Activated T-helper 2 cell treated with anti-CD3 and anti-CD28 coated beads, Interferon-gamma antibody, Interleukin-2, Interleukin-4, amounts not matched to agents 10 μg/mL and 5 μg/mL and 100 μg/mL, durations not matched to agents 14 hours and 24 hours and 36 hours (primary cell): ENCODE measurements at regions of chr11 and their contacts with region 1.

Region 1: DNA sequence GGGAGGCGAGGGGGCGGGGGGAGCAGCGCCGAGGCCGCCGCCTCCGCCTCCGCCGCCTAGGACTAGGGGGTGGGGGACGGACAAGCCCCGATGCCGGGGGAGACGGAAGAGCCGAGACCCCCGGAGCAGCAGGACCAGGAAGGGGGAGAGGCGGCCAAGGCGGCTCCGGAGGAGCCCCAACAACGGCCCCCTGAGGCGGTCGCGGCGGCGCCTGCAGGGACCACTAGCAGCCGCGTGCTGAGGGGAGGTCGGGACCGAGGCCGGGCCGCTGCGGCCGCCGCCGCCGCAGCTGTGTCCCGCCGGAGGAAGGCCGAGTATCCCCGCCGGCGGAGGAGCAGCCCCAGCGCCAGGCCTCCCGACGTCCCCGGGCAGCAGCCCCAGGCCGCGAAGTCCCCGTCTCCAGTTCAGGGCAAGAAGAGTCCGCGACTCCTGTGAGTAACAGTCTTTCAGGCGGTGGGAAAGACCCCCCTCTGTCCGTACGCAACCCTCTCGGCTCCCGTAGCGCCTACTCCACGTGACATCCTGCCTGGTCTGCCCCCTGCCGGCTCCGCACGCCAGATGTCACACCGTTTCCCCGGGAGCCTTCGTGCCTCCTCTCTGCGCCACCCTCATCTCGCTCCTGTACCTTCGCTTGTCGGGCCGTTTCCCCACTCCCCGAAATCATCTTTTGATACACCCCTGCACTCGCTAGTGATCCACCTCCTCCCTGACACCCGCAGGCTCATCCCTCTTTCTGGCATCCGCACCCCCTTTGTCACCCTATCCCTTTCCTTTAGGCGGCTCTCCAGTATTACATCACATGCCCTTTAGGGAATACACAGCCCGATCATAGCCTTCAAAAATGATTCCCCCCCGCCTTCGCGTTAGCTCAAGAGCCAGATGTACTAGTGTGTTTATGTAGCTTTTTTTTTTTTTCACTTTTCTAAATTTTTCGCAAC is 598 bp downstream of the ZFP91 start:
- DNase-seq: peak; percentile 88
- H3K4me3 Mint-ChIP-seq: peak overlapping the region; percentile 95
- H3K27ac Mint-ChIP-seq: peak overlapping the region; percentile 100
- H3K4me1 Mint-ChIP-seq: peaks cover 48% of the 10 kb centered on the region
- H3K27me3 Mint-ChIP-seq: no peaks in the 10 kb centered on the region

Region 2: DNA sequence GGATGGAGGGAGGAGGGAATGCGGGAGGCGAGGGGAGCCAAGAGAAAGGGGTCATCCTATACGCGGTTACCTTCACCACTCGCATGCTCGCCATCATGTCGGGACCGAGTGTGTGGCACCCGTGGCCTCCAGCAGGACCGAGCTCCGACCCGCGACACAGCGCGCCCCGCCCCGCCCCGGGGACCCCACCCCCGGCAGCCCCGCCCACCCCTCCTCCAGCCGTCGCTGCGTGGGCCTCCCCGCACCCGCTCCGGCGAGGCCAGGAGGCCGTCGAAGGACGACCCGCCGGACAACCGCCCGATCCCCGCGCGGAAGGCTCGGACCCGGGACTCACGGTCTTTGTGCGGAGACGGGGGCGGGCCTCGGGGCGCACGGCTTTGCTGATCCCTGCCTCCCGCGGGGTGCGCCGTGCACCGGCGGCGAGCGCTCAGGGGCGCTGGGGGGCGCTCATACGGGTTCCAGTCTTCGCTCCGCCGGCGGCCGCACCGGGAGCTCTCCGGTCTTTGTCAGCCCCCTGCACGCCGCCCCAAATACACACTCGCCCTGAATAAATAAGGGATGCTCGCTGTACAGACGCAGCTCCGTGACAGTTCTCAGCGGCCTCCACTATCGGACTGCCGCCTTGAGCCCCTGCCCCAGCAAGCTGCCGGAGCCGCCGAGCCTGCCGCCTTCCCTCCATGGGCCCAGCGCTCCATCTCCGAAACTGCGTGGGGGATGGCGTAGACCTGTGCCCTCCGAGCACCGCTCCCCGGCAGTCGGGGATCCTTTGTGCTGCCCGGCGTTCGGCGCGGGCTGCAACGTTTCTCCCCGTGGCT is 1011.7 kb before region 1 on chr11 and contains the start of gene UBE2L6:
- intact Hi-C with region 1: loop called (anchors 5 kb)
- DNase-seq: peak; percentile 56
- H3K4me3 Mint-ChIP-seq: peak within 1 kb of the TSS; percentile 99
- H3K27ac Mint-ChIP-seq: peak within 1 kb of the TSS; percentile 97
- H3K4me1 Mint-ChIP-seq: peaks cover 26% of the 10 kb centered on the region
- H3K27me3 Mint-ChIP-seq: no peaks in the 10 kb centered on the region
- total RNA-seq, gene UBE2L6: 135 and 137 TPM in 2 replicates

Region 3: GRCh38 chr11:57792060-57792541 is 787.4 kb before region 1 on chr11:
- intact Hi-C with region 1: loop called (anchors 2 kb)
- DNase-seq: peak; percentile 85
- H3K4me3 Mint-ChIP-seq: peak overlapping the region; percentile 45
- H3K27ac Mint-ChIP-seq: peak overlapping the region; percentile 68
- H3K4me1 Mint-ChIP-seq: peaks cover 40% of the 10 kb centered on the region
- H3K27me3 Mint-ChIP-seq: no peaks in the 10 kb centered on the region

Region 4: GRCh38 chr11:58609723-58610122 is 30.3 kb after region 1 on chr11:
- intact Hi-C with region 1: loop called (anchors 5 kb)
- DNase-seq: no peak
- H3K4me3 Mint-ChIP-seq: no peak overlapping the region
- H3K27ac Mint-ChIP-seq: peak overlapping the region; percentile 8
- H3K4me1 Mint-ChIP-seq: peaks cover 48% of the 10 kb centered on the region
- H3K27me3 Mint-ChIP-seq: no peaks in the 10 kb centered on the region

Region 5: DNA sequence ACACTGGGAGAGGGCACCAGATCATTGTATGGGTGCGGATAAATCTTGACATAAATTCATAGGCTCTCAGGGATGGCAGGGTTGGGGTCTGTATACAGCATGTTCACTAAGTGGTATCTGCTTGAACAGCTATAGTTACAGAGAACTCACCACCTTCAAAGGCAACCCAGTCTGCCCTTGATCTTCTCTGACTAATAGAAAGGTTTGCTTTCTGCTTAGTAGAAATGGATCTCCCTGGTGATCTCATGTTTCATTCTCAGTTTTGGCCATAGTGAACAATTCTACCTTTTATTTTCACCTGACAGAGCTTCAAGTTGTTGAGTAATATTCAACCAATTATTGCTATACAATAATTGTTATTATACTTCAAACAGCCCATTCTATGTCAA is 75.4 kb after region 1 on chr11:
- intact Hi-C with region 1: no loop called
- DNase-seq: no peak
- H3K4me3 Mint-ChIP-seq: no peak overlapping the region
- H3K27ac Mint-ChIP-seq: no peak overlapping the region
- H3K4me1 Mint-ChIP-seq: peaks cover 9% of the 10 kb centered on the region
- H3K27me3 Mint-ChIP-seq: peaks cover 4% of the 10 kb centered on the region

Region 6: GRCh38 chr11:58788355-58789023 is 209.0 kb after region 1 on chr11:
- intact Hi-C with region 1: loop called (anchors 5 kb)
- DNase-seq: peak; percentile 23
- H3K4me3 Mint-ChIP-seq: no peak overlapping the region
- H3K27ac Mint-ChIP-seq: no peak overlapping the region
- H3K4me1 Mint-ChIP-seq: peaks cover 1% of the 10 kb centered on the region
- H3K27me3 Mint-ChIP-seq: no peaks in the 10 kb centered on the region

Region 7: GRCh38 chr11:58888579-58888978 is 309.1 kb after region 1 on chr11:
- intact Hi-C with region 1: no loop called
- DNase-seq: no peak
- H3K4me3 Mint-ChIP-seq: no peak overlapping the region
- H3K27ac Mint-ChIP-seq: no peak overlapping the region
- H3K4me1 Mint-ChIP-seq: no peaks in the 10 kb centered on the region
- H3K27me3 Mint-ChIP-seq: peaks cover 3% of the 10 kb centered on the region

Region 8: GRCh38 chr11:59025097-59025496 is 445.6 kb after region 1 on chr11:
- intact Hi-C with region 1: no loop called
- DNase-seq: no peak
- H3K4me3 Mint-ChIP-seq: no peak overlapping the region
- H3K27ac Mint-ChIP-seq: no peak overlapping the region
- H3K4me1 Mint-ChIP-seq: no peaks in the 10 kb centered on the region
- H3K27me3 Mint-ChIP-seq: peaks cover 7% of the 10 kb centered on the region

Region 9: GRCh38 chr11:59668950-59669610 is 1089.6 kb after region 1 on chr11 and contains the start of gene PATL1:
- intact Hi-C with region 1: loop called (anchors 2 kb)
- DNase-seq: peak; percentile 99
- H3K4me3 Mint-ChIP-seq: peak within 1 kb of the TSS; percentile 97
- H3K27ac Mint-ChIP-seq: peak within 1 kb of the TSS; percentile 98
- H3K4me1 Mint-ChIP-seq: peaks cover 36% of the 10 kb centered on the region
- H3K27me3 Mint-ChIP-seq: no peaks in the 10 kb centered on the region
- total RNA-seq, gene PATL1: 69.0 and 71.2 TPM in 2 replicates